ENCODE measurements at regions of chr12 and their contacts with region 1.

Region 1: GRCh38 chr12:112283546-112283945 is 98.7 kb downstream of the HECTD4 start:
- DNase-seq: peak in 2 of 5 donors; percentile 9 to 33
- ATAC-seq: peak in 3 of 4 donors; percentile 72 to 75 (median 75)
- H3K4me3 ChIP-seq: no peak overlapping the region
- H3K27ac ChIP-seq: peak overlapping the region in 4 of 12 donors; percentile 2 to 48 (median 24)
- H3K4me1 ChIP-seq: peaks cover 0 to 26% (median 11%) of the 10 kb centered on the region in 12 donors
- H3K27me3 ChIP-seq: no peaks in the 10 kb centered on the region
- CTCF ChIP-seq: no peak
- POLR2A ChIP-seq: no peak

Region 2: DNA sequence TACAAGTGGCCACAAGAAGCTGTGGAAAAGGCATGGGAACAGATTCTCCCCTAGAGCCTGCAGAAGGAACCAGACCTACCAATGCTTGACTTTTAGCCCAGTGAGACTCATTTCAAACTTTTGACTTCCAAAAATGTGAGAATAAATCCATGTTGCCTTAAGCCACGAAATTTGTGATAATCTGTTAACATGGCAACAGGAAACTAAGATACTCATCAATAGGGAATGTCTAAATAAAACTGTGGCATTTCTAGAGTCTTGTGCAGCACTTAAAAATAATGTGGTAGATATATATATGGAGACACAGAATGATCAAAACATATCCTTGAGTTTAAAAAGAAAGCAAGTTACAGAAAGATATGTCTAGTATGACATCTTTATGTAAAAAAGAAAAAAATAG is 86.7 kb after region 1 on chr12:
- intact Hi-C with region 1: loop called in 1 of 10 experiments (anchors 5 kb)
- DNase-seq: no peak
- ATAC-seq: no peak
- H3K4me3 ChIP-seq: no peak overlapping the region
- H3K27ac ChIP-seq: no peak overlapping the region
- H3K4me1 ChIP-seq: peaks cover 0 to 25% (median 7%) of the 10 kb centered on the region in 12 donors
- H3K27me3 ChIP-seq: no peaks in the 10 kb centered on the region
- CTCF ChIP-seq: no peak
- POLR2A ChIP-seq: no peak

Region 3: DNA sequence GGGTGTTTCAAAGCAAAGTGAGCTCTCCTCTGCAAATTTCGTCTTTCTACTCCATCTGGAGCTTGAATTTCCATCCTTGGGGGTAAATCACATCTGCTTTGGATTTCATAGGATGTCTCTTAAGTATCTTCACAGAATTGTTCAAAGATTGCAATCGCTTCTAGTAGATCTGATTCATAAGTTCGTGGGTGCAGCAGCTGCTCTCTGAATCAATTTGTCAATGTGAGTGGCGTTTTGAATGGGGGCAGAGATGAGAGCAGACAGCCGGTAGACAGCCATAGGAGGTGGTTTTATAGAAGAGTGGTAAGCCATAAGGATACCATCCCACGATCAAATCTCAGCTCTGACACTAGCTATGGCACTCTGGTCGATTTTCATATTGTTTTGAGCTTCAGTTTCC is 362.0 kb after region 1 on chr12:
- intact Hi-C with region 1: no loop called
- DNase-seq: no peak
- ATAC-seq: no peak
- H3K4me3 ChIP-seq: no peak overlapping the region
- H3K27ac ChIP-seq: no peak overlapping the region
- H3K4me1 ChIP-seq: no peaks in the 10 kb centered on the region
- H3K27me3 ChIP-seq: peaks cover 0 to 7% (median 0%) of the 10 kb centered on the region in 9 donors
- CTCF ChIP-seq: no peak
- POLR2A ChIP-seq: no peak

Measured in heart left ventricle (tissue), 16 donors.